ENCODE measurements at regions of chr10 and their contacts with region 1.

Region 1: GRCh38 chr10:102835007-102835482 is 2.2 kb downstream of the CYP17A1 start:
- DNase-seq: peak; percentile 64 to 77 (median 68)
- ATAC-seq: peak; percentile 81 to 90 (median 86)
- H3K4me3 ChIP-seq: no peak overlapping the region
- H3K27ac ChIP-seq: no peak overlapping the region
- H3K4me1 ChIP-seq: peaks cover 0 to 16% (median 3%) of the 10 kb centered on the region in 4 donors
- H3K27me3 ChIP-seq: no peaks in the 10 kb centered on the region
- CTCF ChIP-seq: peak; percentile 84 to 95 (median 89)
- POLR2A ChIP-seq: no peak

Region 2: DNA sequence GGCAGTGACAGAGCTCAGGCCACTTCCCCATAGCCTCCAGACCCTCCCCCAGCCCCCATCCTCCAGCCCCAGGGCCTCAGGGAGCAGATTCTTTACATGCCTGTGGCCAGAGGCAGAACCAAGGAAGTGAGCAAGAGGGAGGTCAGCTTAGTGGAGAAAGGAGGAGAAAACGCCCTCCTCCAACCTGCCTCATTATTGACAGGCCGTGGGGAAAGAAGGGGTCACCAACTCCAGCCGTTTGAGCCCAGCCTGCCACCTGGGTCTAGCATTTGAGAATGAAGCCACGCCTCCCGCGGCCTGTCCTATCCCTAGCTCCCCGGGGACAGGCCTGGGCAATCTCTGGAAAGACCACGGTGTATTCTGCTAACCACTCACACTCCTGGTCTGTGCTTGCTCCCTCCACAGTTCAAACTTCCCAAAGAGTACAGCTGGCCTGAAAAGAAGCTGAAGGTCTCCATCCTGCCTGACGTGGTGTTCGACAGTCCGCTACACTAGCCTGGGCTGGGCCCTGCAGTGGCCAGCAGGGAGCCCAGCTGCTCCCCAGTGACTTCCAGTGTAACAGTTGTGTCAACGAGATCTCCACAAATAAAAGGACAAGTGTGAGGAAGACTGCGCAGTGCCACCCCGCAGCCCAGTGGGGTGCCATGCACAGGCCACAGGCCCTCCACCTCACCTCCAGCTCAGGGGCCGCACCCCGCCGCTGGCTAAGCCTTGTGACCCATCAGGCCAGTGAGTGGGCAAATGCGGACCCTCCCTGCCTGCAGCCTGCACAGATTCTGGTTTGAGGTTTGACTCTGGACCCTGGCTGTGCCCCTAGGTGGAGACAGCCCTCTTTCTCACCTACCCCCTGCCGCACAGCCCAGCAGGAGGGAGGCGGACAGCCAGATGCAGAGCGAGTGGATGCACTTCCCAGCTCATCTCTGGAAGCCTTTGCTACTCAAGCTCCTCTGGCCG is 205.1 kb before region 1 on chr10:
- intact Hi-C with region 1: no loop called
- DNase-seq: peak in 2 of 3 donors; percentile 22 to 45
- ATAC-seq: no peak
- H3K4me3 ChIP-seq: no peak overlapping the region
- H3K27ac ChIP-seq: peak overlapping the region in 1 of 3 donors; percentile 93
- H3K4me1 ChIP-seq: peaks cover 0 to 28% (median 8%) of the 10 kb centered on the region in 4 donors
- H3K27me3 ChIP-seq: no peaks in the 10 kb centered on the region
- CTCF ChIP-seq: no peak
- POLR2A ChIP-seq: no peak

Region 3: GRCh38 chr10:102904346-102904745 is 69.3 kb after region 1 on chr10:
- intact Hi-C with region 1: loop called (anchors 5 kb)
- DNase-seq: no peak
- ATAC-seq: no peak
- H3K4me3 ChIP-seq: no peak overlapping the region
- H3K27ac ChIP-seq: no peak overlapping the region
- H3K4me1 ChIP-seq: no peaks in the 10 kb centered on the region
- H3K27me3 ChIP-seq: no peaks in the 10 kb centered on the region
- CTCF ChIP-seq: no peak
- POLR2A ChIP-seq: no peak

Measured in right lobe of liver (tissue), 6 donors.